Heart right ventricle (tissue), 16 donors: ENCODE measurements at regions of chr16 and their contacts with region 1.

Region 1: GRCh38 chr16:5393070-5393469 is 295.5 kb upstream of the EEF2KMT start:
- DNase-seq: no peak
- ATAC-seq: no peak
- H3K4me3 ChIP-seq: no peak overlapping the region
- H3K27ac ChIP-seq: no peak overlapping the region
- H3K4me1 ChIP-seq: no peaks in the 10 kb centered on the region
- H3K27me3 ChIP-seq: peaks cover 0 to 5% (median 0%) of the 10 kb centered on the region in 7 donors
- CTCF ChIP-seq: no peak

Region 2: DNA sequence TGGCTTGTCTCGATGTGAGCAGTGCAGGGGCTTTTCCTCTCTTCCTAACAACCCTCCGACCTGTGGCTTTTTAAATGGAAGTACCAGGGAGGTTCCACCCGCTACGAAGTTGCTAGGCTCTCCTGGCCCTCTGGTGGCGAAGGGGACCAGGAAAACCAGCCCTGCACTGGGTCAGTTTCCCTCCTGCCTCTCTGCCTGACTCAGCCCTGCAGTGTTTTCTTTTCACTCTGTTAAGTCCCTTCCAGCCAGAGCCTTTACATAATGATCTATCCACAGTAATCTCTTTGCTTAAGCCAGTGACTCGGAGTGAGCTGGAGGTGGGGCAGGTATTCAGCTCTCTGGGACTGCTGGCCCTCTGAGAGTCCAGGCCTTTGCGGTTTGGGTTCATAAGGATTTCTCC is 35.9 kb after region 1 on chr16:
- intact Hi-C with region 1: loop called in 1 of 10 experiments (anchors 1 kb)
- DNase-seq: no peak
- ATAC-seq: no peak
- H3K4me3 ChIP-seq: no peak overlapping the region
- H3K27ac ChIP-seq: no peak overlapping the region
- H3K4me1 ChIP-seq: no peaks in the 10 kb centered on the region
- H3K27me3 ChIP-seq: peaks cover 0 to 20% (median 0%) of the 10 kb centered on the region in 7 donors
- CTCF ChIP-seq: no peak